MCF 10A (cell line): ENCODE measurements at regions of chr15 and their contacts with region 1.

Region 1: DNA sequence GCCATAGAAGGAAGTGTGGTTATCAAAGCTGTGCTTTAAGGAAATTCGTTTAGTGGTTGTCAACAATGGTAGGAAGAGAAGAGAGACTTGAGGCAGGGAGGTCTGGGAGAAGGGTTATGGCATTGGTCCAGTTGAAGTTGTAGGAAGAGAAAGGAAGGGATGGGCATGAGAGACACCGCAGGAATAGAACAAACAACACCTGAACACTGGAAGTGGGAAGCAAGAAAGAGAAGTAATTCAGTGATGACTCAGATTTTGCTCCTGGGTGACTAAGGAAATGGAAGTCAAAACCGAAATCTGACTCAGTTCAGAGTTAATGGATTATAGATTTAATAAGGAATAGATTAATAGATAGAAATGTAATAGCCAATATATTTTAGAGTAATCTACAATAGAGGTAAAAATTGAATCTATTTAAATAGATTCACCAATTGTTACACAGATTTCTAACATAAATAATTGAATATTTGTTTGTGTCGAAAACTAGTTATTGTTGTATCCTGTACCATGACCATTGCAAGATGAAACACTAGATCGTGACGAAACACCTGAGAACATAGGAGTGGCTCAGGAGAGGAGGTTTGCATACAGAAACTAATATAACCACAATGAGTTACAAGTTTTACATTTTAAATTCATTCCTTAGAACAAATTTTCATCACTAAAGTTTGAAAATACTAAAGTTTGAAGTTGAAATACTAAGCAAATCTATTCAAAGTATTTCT is 36.0 kb downstream of the THBS1 start:
- DNase-seq: peak; percentile 82
- H3K4me3 Mint-ChIP-seq: peak overlapping the region; percentile 37
- H3K27ac Mint-ChIP-seq: peak overlapping the region; percentile 91
- H3K4me1 Mint-ChIP-seq: peaks cover 25% of the 10 kb centered on the region
- H3K27me3 Mint-ChIP-seq: no peaks in the 10 kb centered on the region
- CTCF ChIP-seq: no peak

Region 2: GRCh38 chr15:39598186-39598850 is 18.6 kb before region 1 on chr15:
- CTCF ChIA-PET with region 1: interaction called, 3 read pairs
- POLR2A ChIA-PET with region 1: interaction called, 14 read pairs
- intact Hi-C with region 1: no loop called
- DNase-seq: no peak
- H3K4me3 Mint-ChIP-seq: no peak overlapping the region
- H3K27ac Mint-ChIP-seq: no peak overlapping the region
- H3K4me1 Mint-ChIP-seq: peaks cover 17% of the 10 kb centered on the region
- H3K27me3 Mint-ChIP-seq: no peaks in the 10 kb centered on the region
- CTCF ChIP-seq: no peak